Transverse colon (tissue), 4 donors: ENCODE measurements at regions of chr5 and their contacts with region 1.

Region 1: GRCh38 chr5:112025757-112026156 is 268.8 kb upstream of the NREP start:
- DNase-seq: no peak
- H3K4me3 ChIP-seq: no peak overlapping the region
- H3K27ac ChIP-seq: no peak overlapping the region
- H3K4me1 ChIP-seq: no peaks in the 10 kb centered on the region
- H3K27me3 ChIP-seq: no peaks in the 10 kb centered on the region
- CTCF ChIP-seq: no peak
- EP300 ChIP-seq: no peak
- POLR2A ChIP-seq: no peak

Region 2: DNA sequence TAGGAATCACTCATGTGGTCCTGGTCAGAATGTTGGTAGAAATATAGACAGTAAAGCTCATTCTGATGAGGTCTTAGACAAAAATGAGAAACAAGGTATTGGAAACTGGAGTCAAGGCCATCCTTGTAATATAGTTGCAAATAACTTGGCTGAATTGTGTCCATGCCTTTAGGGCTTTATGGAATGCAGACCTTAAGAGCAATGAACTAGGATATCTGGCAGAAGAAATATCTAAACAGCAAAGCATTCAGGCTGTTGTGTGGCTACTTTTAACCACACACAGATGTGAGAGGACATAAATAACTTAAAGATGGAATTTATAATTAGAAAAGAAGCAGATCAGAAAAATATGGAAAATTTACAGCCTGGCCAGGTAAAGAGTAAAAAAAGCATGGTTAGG is 1616.0 kb after region 1 on chr5:
- in situ Hi-C with region 1: no loop called
- intact Hi-C with region 1: loop called (anchors 10 kb)
- DNase-seq: no peak
- H3K4me3 ChIP-seq: no peak overlapping the region
- H3K27ac ChIP-seq: no peak overlapping the region
- H3K4me1 ChIP-seq: no peaks in the 10 kb centered on the region
- H3K27me3 ChIP-seq: no peaks in the 10 kb centered on the region
- CTCF ChIP-seq: no peak
- EP300 ChIP-seq: no peak
- POLR2A ChIP-seq: no peak